ENCODE measurements at regions of chr22 and their contacts with region 1.

Region 1: DNA sequence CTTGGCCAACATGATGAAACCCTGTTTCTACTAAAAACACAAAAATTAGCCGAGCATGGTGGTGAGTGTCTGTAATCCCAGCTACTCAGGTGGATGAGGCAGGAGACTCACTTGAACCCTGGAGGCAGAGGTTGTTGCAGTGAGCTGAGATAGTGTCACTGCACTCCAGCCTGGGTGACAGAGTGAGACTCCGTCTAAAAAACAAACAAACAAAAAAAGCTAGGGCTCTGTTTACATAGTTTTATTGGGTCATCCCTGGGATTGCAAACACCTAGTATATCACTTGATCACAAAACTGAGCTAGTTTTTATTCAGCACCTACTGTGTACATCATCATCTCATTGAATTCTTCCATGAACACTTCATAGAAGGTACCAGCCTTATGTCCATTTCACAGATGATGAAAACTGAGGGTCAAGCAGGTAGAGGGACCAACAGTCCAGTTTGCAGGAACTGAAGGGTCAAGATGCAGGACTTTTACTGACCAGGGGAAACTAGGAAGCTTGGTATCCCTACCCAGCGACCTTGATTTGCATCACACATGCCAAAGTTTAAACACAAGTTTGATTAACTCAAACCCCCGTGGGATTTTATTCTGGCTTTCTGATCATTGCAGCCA is 9.2 kb upstream of the MRTFA start:
- DNase-seq: no peak
- ATAC-seq: no peak
- H3K4me3 ChIP-seq: no peak overlapping the region
- H3K27ac ChIP-seq: no peak overlapping the region
- H3K4me1 ChIP-seq: peaks cover 18% of the 10 kb centered on the region
- H3K27me3 ChIP-seq: no peaks in the 10 kb centered on the region
- CTCF ChIP-seq: no peak
- EP300 ChIP-seq: no peak
- POLR2A ChIP-seq: no peak
- RAD21 ChIP-seq: no peak

Region 2: GRCh38 chr22:40400159-40400558 is 245.5 kb before region 1 on chr22:
- CTCF ChIA-PET with region 1: interaction called, 9 read pairs
- POLR2A ChIA-PET with region 1: no interaction called
- RAD21 ChIA-PET with region 1: no interaction called
- SMC1A ChIA-PET with region 1: interaction called, 10 read pairs
- in situ Hi-C with region 1: no loop called
- intact Hi-C with region 1: no loop called
- DNase-seq: peak; percentile 63
- ATAC-seq: peak; percentile 70
- H3K4me3 ChIP-seq: no peak overlapping the region
- H3K27ac ChIP-seq: peak overlapping the region; percentile 68; the same call in 1 of the 2 replicates
- H3K4me1 ChIP-seq: peaks cover 38% of the 10 kb centered on the region
- H3K27me3 ChIP-seq: no peaks in the 10 kb centered on the region
- CTCF ChIP-seq: no peak
- EP300 ChIP-seq: no peak
- POLR2A ChIP-seq: no peak
- RAD21 ChIP-seq: no peak

Region 3: GRCh38 chr22:40502919-40503318 is 142.8 kb before region 1 on chr22:
- CTCF ChIA-PET with region 1: interaction called, 4 read pairs
- POLR2A ChIA-PET with region 1: no interaction called
- RAD21 ChIA-PET with region 1: interaction called, 3 read pairs
- SMC1A ChIA-PET with region 1: interaction called, 15 read pairs
- in situ Hi-C with region 1: no loop called
- intact Hi-C with region 1: no loop called
- DNase-seq: no peak
- ATAC-seq: 0 out of 3 replicates have a peak, but pooled peaks have one; percentile 9
- H3K4me3 ChIP-seq: no peak overlapping the region
- H3K27ac ChIP-seq: no peak overlapping the region
- H3K4me1 ChIP-seq: peaks cover 35% of the 10 kb centered on the region
- H3K27me3 ChIP-seq: no peaks in the 10 kb centered on the region
- CTCF ChIP-seq: no peak
- EP300 ChIP-seq: no peak
- POLR2A ChIP-seq: no peak
- RAD21 ChIP-seq: no peak

Region 4: DNA sequence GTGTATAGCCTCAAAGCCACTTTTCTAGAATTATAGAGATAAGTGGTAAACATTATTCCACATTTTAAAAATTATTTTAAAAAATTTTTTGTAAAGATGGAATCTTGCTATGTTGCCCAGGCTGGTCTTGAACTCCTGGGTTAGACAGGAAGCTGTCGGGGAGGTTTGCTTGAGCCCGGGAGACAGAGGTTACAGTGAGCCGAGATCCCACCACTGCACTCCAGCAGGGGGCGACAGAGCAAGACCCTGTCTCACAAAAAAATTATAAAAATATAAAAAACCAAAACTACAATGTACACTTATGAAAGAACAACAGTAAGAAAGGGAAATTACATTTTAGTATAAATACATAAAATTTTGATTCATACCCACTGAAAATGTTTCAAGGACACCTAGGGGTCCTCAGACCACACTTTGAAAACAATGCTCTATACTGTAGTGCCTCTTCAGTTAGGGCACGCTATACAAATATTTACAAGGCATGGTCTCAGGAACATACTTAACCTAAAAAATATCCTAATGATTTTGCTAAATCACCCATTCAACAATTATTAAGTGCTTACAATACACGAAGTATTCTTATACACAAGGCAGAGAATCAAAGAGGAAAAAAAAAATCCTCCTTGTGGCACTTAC is 120.3 kb before region 1 on chr22:
- CTCF ChIA-PET with region 1: interaction called, 339 read pairs
- POLR2A ChIA-PET with region 1: interaction called, 11 read pairs
- RAD21 ChIA-PET with region 1: interaction called, 137 read pairs
- SMC1A ChIA-PET with region 1: interaction called, 248 read pairs
- in situ Hi-C with region 1: loop called (anchors 5 kb)
- intact Hi-C with region 1: loop called (anchors 1 kb)
- DNase-seq: no peak
- ATAC-seq: peak; percentile 78
- H3K4me3 ChIP-seq: no peak overlapping the region
- H3K27ac ChIP-seq: no peak overlapping the region; the same call in 1 of the 2 replicates
- H3K4me1 ChIP-seq: peaks cover 15% of the 10 kb centered on the region
- H3K27me3 ChIP-seq: no peaks in the 10 kb centered on the region
- CTCF ChIP-seq: peak; percentile 51 to 68 (median 62)
- EP300 ChIP-seq: no peak
- POLR2A ChIP-seq: no peak
- RAD21 ChIP-seq: peak; percentile 68

Region 5: DNA sequence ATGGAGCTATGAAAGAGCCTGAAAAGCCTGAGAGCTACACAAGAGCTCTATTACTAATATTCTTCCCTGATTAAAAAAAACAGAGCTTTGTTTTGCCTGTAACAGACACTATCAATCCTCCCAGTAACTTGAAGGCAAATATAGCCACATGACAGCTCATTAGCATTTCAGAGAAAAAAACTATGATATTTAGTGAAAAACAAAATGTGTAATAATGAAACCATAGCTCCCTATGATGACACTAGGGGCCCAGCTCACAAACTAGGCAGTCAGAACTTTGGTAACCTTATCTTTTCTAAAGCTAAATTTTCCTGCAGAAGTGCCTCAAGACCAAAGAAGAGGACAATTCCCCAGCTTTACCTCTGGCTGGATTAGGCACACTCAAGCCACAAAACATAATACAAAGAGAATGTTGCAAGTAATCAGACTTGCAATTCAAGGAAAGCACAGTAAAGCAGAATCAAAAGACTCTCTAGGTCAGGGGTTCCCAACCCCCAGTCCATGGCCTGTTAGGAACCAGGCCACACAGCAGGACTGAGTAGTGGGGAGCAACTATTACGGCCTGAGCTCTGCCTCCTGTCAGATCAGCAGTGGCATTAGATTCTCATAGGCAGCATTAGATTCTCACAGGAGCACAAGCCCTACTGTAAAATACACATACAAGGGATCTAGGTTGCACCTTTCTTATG is 62.5 kb before region 1 on chr22:
- CTCF ChIA-PET with region 1: interaction called, 20 read pairs
- POLR2A ChIA-PET with region 1: interaction called, 5 read pairs
- RAD21 ChIA-PET with region 1: interaction called, 6 read pairs
- SMC1A ChIA-PET with region 1: interaction called, 5 read pairs
- in situ Hi-C with region 1: no loop called
- intact Hi-C with region 1: no loop called
- DNase-seq: no peak
- ATAC-seq: peak; percentile 84
- H3K4me3 ChIP-seq: peak overlapping the region; percentile 12; the same call in 1 of the 2 replicates
- H3K27ac ChIP-seq: peak overlapping the region; percentile 28
- H3K4me1 ChIP-seq: peaks cover 36% of the 10 kb centered on the region
- H3K27me3 ChIP-seq: no peaks in the 10 kb centered on the region
- CTCF ChIP-seq: no peak
- EP300 ChIP-seq: no peak; a peak in 1 of 4 replicates
- POLR2A ChIP-seq: no peak
- RAD21 ChIP-seq: no peak

Region 6: GRCh38 chr22:40605676-40606250 is 39.9 kb before region 1 on chr22:
- CTCF ChIA-PET with region 1: interaction called, 10 read pairs
- POLR2A ChIA-PET with region 1: no interaction called
- RAD21 ChIA-PET with region 1: interaction called, 3 read pairs
- SMC1A ChIA-PET with region 1: interaction called, 4 read pairs
- in situ Hi-C with region 1: no loop called
- intact Hi-C with region 1: no loop called
- DNase-seq: no peak
- ATAC-seq: no peak
- H3K4me3 ChIP-seq: no peak overlapping the region
- H3K27ac ChIP-seq: no peak overlapping the region
- H3K4me1 ChIP-seq: no peaks in the 10 kb centered on the region
- H3K27me3 ChIP-seq: no peaks in the 10 kb centered on the region
- CTCF ChIP-seq: no peak
- EP300 ChIP-seq: no peak
- POLR2A ChIP-seq: no peak
- RAD21 ChIP-seq: no peak

Region 7: DNA sequence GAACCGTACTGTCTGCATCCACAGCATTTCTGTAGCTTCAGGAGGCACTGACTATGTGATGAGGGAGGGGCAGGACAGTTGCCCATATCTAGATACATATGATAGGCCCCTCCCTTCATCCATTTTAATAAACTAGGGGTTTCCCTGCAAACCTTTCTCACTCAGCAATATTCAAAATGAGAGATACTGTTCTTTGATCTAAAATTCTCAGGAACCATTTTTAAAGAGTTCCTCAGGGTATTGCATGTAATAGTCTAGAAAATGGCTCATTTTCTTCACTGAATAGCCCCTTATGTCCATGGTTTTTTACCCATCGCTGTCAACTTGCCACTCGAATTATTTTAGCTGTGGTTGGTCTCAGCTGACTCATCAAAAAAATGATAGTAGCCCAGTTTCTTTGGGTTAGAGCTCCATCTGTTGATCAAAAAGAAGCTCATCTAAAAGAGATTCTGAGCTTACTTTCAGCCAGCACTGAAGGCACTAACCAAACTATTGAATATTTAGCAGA is 253.2 kb after region 1 on chr22:
- CTCF ChIA-PET with region 1: interaction called, 26 read pairs
- POLR2A ChIA-PET with region 1: interaction called, 3 read pairs
- RAD21 ChIA-PET with region 1: interaction called, 19 read pairs
- SMC1A ChIA-PET with region 1: interaction called, 10 read pairs
- in situ Hi-C with region 1: no loop called
- intact Hi-C with region 1: no loop called
- DNase-seq: peak; percentile 44
- ATAC-seq: peak; percentile 92
- H3K4me3 ChIP-seq: no peak overlapping the region
- H3K27ac ChIP-seq: no peak overlapping the region
- H3K4me1 ChIP-seq: no peaks in the 10 kb centered on the region
- H3K27me3 ChIP-seq: no peaks in the 10 kb centered on the region
- CTCF ChIP-seq: peak; percentile 48 to 68 (median 54); a peak in 5 of 6 replicates
- EP300 ChIP-seq: no peak
- POLR2A ChIP-seq: no peak
- RAD21 ChIP-seq: peak; percentile 77

Region 8: GRCh38 chr22:41048791-41049717 is 403.4 kb after region 1 on chr22:
- CTCF ChIA-PET with region 1: no interaction called
- POLR2A ChIA-PET with region 1: no interaction called
- RAD21 ChIA-PET with region 1: no interaction called
- SMC1A ChIA-PET with region 1: no interaction called
- in situ Hi-C with region 1: no loop called
- intact Hi-C with region 1: no loop called
- DNase-seq: no peak
- ATAC-seq: no peak
- H3K4me3 ChIP-seq: no peak overlapping the region
- H3K27ac ChIP-seq: no peak overlapping the region
- H3K4me1 ChIP-seq: 0 out of 2 replicates have a peak, but pooled peaks cover 5% of the 10 kb centered on the region
- H3K27me3 ChIP-seq: no peaks in the 10 kb centered on the region
- CTCF ChIP-seq: no peak
- EP300 ChIP-seq: no peak
- POLR2A ChIP-seq: no peak
- RAD21 ChIP-seq: no peak